ENCODE measurements at regions of chr4 and their contacts with region 1.

Region 1: DNA sequence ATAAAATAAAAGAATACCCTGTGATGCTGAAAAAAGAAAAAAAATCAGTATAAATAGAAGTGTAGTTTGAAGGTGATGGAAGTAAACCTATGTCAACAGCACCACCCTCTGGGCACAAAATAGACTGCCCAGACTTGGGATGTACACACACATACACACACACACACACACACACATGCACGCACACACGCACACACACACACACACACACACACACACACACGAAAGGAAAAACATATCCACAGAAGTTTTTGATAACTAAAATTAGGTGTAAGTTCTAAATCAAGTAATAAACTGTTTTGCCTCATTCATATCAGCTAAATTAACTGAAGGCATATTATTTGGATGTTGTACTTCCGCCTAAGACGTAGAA is 40.5 kb downstream of the ANXA5 start:
- DNase-seq: no peak
- ATAC-seq: peak; percentile 76
- H3K4me3 ChIP-seq: no peak overlapping the region
- H3K27ac ChIP-seq: no peak overlapping the region
- H3K4me1 ChIP-seq: no peaks in the 10 kb centered on the region
- H3K27me3 ChIP-seq: no peaks in the 10 kb centered on the region

Region 2: GRCh38 chr4:120198411-120198810 is 1457.8 kb before region 1 on chr4:
- intact Hi-C with region 1: no loop called
- DNase-seq: no peak
- ATAC-seq: no peak
- H3K4me3 ChIP-seq: no peak overlapping the region
- H3K27ac ChIP-seq: no peak overlapping the region
- H3K4me1 ChIP-seq: no peaks in the 10 kb centered on the region
- H3K27me3 ChIP-seq: no peaks in the 10 kb centered on the region

Region 3: DNA sequence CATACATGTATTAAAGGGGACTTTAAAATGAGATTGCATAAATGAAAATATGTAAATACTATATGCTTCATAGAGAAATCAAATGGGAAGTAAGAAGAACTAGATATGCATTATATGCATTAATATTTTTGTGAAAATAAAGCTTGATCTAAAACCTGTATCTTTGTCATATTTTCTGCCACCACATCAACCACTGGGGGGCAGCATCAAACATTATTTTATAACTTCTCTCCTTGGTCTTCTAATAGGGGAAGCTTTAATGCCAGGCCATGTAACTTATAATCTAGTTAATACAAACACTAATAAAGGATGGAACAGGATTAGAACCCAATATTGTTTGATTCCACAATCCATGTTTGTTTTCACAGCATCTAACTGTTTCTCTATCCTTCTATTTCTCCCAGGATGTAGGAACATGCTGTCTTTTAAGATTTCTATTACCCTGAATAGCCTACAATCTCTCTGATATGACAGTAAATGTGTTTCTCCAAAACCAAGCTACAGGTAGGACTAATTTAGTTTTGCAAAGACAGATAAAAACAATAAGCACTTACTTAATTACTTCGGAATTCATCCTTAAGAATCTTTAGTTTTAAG is 285.4 kb before region 1 on chr4:
- intact Hi-C with region 1: loop called (anchors 5 kb)
- DNase-seq: no peak
- ATAC-seq: no peak
- H3K4me3 ChIP-seq: no peak overlapping the region
- H3K27ac ChIP-seq: no peak overlapping the region
- H3K4me1 ChIP-seq: no peaks in the 10 kb centered on the region
- H3K27me3 ChIP-seq: no peaks in the 10 kb centered on the region

Region 4: GRCh38 chr4:121484633-121485032 is 171.6 kb before region 1 on chr4:
- intact Hi-C with region 1: loop called in 1 of 2 experiments (anchors 10 kb)
- DNase-seq: no peak
- ATAC-seq: peak; percentile 45
- H3K4me3 ChIP-seq: no peak overlapping the region
- H3K27ac ChIP-seq: no peak overlapping the region
- H3K4me1 ChIP-seq: no peaks in the 10 kb centered on the region
- H3K27me3 ChIP-seq: no peaks in the 10 kb centered on the region